Activated CD4-positive, alpha-beta T cell treated with anti-CD3 and anti-CD28 coated beads, Interleukin-2, amount 10 ng/mL, durations not matched to agents 24 days and 14 days (primary cell): ENCODE measurements at regions of chr15 and their contacts with region 1.

Region 1: GRCh38 chr15:78709263-78709882 is 68.4 kb upstream of the CHRNB4 start:
- DNase-seq: peak; percentile 91
- H3K4me3 Mint-ChIP-seq: no peak overlapping the region
- H3K27ac Mint-ChIP-seq: no peak overlapping the region
- H3K4me1 Mint-ChIP-seq: peaks cover 5% of the 10 kb centered on the region
- H3K27me3 Mint-ChIP-seq: peaks cover 30% of the 10 kb centered on the region

Region 2: GRCh38 chr15:78618490-78618934 is 90.9 kb before region 1 on chr15:
- intact Hi-C with region 1: loop called (anchors 1 kb)
- DNase-seq: peak; percentile 94
- H3K4me3 Mint-ChIP-seq: no peak overlapping the region
- H3K27ac Mint-ChIP-seq: no peak overlapping the region
- H3K4me1 Mint-ChIP-seq: peaks cover 2% of the 10 kb centered on the region
- H3K27me3 Mint-ChIP-seq: peaks cover 41% of the 10 kb centered on the region

Region 3: GRCh38 chr15:78638658-78639314 is 70.6 kb before region 1 on chr15:
- intact Hi-C with region 1: loop called (anchors 2 kb)
- DNase-seq: peak; percentile 80
- H3K4me3 Mint-ChIP-seq: no peak overlapping the region
- H3K27ac Mint-ChIP-seq: no peak overlapping the region
- H3K4me1 Mint-ChIP-seq: peaks cover 7% of the 10 kb centered on the region
- H3K27me3 Mint-ChIP-seq: peaks cover 21% of the 10 kb centered on the region

Region 4: GRCh38 chr15:78726870-78727551 is 17.6 kb after region 1 on chr15:
- intact Hi-C with region 1: no loop called
- DNase-seq: no peak
- H3K4me3 Mint-ChIP-seq: no peak overlapping the region
- H3K27ac Mint-ChIP-seq: no peak overlapping the region
- H3K4me1 Mint-ChIP-seq: peaks cover 7% of the 10 kb centered on the region
- H3K27me3 Mint-ChIP-seq: peaks cover 4% of the 10 kb centered on the region

Region 5: DNA sequence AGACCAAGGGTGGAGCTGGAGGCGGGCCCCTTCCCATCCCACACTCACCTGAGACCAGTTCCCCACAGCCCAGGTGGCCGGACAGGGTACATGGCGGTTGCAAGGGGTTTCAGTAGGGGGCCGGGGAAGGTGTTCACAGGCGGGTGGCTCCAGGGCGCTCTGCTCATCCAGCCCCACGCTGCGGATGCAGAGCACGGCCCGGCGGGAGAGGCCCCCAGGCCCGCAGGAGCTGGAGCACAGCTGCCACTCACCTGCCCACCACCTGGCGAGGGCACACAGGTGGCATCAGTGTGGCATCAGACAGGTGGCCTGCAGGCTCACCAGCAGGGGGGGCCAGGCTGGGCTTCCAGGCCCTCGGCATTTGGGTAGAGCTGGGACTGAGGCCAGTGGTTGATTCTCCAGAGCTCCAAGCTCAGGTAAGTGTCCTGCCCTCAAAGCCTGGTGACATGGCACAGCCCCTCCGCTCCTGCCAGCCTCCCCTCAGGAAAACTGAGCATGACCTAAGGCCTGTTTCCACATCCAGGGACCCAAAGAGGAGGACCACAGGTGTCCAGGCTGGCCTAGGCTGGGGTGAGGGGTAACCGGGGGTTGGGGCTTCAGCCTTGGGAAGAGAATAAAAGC is 58.1 kb after region 1 on chr15:
- intact Hi-C with region 1: no loop called
- DNase-seq: no peak
- H3K4me3 Mint-ChIP-seq: no peak overlapping the region
- H3K27ac Mint-ChIP-seq: no peak overlapping the region
- H3K4me1 Mint-ChIP-seq: peaks cover 2% of the 10 kb centered on the region
- H3K27me3 Mint-ChIP-seq: no peaks in the 10 kb centered on the region